Endothelial cell of umbilical vein (primary cell): ENCODE measurements at regions of chr10 and their contacts with region 1.

Region 1: GRCh38 chr10:11673346-11674280 is 62.2 kb upstream of the USP6NL start:
- DNase-seq: peak; percentile 94
- H3K4me3 ChIP-seq: no peak overlapping the region
- H3K27ac ChIP-seq: peak overlapping the region; percentile 46
- H3K4me1 ChIP-seq: peaks cover 21% of the 10 kb centered on the region
- H3K27me3 ChIP-seq: no peaks in the 10 kb centered on the region
- CTCF ChIP-seq: no peak
- POLR2A ChIP-seq: peak; percentile 57

Region 2: DNA sequence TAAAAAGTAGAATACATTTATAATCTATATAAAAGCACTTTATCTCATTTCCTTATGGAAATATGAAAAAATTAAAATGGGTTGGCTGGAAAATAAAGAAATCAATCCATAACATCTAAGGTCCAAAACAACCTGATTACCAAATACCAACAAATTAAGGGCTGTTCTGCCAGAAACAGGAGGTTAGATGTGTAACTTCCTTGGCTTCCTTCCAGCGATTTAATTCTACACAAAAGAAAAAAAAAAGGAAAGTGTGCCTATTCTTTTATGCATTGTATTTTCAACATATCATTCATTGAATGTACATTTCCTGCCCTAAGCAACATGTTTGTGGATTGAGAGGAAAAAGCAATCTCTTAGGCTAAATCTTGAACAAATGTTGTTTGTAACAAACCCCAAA is 25.9 kb before region 1 on chr10:
- CTCF ChIA-PET with region 1: interaction called, 5 read pairs
- POLR2A ChIA-PET with region 1: interaction called, 7 read pairs
- dilution Hi-C with region 1: no loop called
- intact Hi-C with region 1: loop called (anchors 1 kb)
- DNase-seq: peak; percentile 86
- H3K4me3 ChIP-seq: no peak overlapping the region
- H3K27ac ChIP-seq: peak overlapping the region; percentile 25
- H3K4me1 ChIP-seq: peaks cover 25% of the 10 kb centered on the region
- H3K27me3 ChIP-seq: no peaks in the 10 kb centered on the region
- CTCF ChIP-seq: no peak
- POLR2A ChIP-seq: no peak